Sciatic nerve (tissue), 2 donors: ENCODE measurements at regions of chr16 and their contacts with region 1.

Region 1: GRCh38 chr16:86563489-86564345 is 2.9 kb upstream of the FOXC2 start:
- DNase-seq: peak; percentile 95
- ATAC-seq: peak; percentile 83

Region 2: GRCh38 chr16:86575754-86576557 is 12.2 kb after region 1 on chr16:
- intact Hi-C with region 1: no loop called
- DNase-seq: peak; percentile 91
- ATAC-seq: peak; percentile 88

Region 3: DNA sequence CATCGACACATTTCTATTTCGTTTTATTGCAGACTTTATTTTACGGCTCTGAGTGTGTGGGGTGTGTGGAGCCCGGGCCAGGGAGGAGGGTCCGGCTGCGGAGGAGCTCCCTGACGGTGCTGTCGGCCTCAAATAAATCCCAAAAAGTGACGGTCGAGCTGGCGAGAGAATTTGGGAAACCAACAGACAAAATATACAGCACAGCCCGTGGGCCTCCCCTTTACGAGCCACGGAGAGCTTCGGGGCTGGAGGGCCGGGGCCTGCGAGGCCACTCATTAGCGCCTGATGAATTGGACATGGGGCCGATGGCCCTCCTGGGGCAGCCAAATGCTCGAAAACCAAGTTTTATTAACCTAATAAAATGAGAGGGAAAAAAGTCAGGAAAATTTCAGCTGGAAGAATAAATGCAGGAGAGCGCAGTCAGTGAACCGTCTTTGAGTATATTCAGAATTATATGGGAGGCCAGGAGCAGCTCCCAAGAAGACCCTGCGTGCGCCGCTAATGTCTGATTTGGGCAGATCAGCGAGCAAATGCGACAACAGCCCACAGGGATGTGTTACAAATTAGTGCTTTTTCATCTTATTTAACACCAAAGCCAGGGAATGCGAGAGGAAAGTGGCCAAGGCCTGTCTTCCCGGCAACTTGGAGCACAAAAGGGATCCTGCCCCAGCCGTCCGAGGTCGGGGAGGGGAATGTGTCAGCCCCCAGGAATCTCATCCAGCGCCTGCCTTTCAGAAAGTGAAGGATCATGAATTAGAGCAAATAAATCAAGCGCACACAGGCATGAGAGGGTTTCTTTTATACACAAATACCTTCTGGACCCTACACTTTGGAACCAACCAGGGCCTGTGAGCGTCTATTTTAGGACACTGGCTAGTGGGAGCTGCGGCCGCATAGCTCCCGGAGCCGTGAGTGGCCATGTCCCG is 504.4 kb after region 1 on chr16:
- intact Hi-C with region 1: loop called (anchors 5 kb)
- DNase-seq: no peak
- ATAC-seq: no peak

Region 4: GRCh38 chr16:87263471-87263961 is 699.8 kb after region 1 on chr16:
- intact Hi-C with region 1: no loop called
- DNase-seq: peak; percentile 43
- ATAC-seq: peak; percentile 79

Region 5: DNA sequence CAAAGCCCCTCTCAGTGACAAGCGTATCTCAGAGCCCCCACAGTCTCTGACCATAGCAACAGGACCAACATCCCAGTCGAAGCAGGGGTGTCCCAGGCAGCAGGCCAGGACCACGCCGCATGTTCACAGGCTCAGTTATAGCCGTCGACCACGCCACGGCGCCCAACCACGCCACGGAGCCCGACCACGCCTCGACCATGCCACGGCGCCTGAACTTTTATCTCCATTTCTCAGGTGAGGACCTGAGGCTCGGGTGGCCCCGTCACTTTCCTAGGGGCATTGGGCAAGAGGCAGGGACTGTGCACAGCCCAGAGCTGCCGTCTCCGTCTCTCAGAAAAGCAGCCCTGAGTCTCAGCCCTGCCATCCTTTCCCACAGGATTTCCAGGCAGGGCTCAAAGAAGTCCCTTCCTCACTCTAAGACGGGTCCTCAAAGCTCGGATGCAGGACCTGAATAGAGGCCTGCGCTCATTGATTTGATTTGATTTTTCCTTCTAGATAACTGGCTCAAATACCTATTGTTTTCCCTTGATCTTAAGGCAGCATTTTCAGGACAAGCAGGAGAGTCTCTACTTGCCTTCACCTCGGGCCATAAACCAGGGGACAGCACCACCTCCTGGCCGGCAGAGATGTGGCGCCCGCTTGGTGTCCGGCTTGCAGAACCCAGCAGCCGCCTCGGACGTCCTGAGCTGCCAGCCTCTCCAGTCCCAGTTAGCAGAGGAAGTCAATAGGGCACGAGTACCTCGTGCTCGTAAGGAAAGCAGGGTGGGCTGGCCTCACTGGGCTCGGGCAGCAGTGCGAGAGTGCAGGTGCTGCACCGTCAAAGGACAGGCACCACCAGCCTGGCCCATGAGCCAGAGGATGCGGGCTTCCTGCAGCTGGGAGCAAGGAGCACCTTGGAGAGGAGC is 714.7 kb after region 1 on chr16:
- intact Hi-C with region 1: loop called (anchors 5 kb)
- DNase-seq: peak; percentile 89
- ATAC-seq: peak; percentile 96